Dorsolateral prefrontal cortex (tissue), 120 donors: ENCODE measurements at regions of chr17 and their contacts with region 1.

Region 1: GRCh38 chr17:17919169-17920107 is 52.8 kb downstream of the TOM1L2 start:
- DNase-seq: peak; percentile 40 to 81 (median 78)
- H3K4me3 ChIP-seq: no peak overlapping the region
- H3K27ac ChIP-seq: peak overlapping the region in 52 of 59 donors; percentile 24 to 99 (median 90)
- H3K27me3 ChIP-seq: no peaks in the 10 kb centered on the region
- CTCF ChIP-seq: peak in 55 of 56 donors; percentile 33 to 88 (median 74)

Region 2: DNA sequence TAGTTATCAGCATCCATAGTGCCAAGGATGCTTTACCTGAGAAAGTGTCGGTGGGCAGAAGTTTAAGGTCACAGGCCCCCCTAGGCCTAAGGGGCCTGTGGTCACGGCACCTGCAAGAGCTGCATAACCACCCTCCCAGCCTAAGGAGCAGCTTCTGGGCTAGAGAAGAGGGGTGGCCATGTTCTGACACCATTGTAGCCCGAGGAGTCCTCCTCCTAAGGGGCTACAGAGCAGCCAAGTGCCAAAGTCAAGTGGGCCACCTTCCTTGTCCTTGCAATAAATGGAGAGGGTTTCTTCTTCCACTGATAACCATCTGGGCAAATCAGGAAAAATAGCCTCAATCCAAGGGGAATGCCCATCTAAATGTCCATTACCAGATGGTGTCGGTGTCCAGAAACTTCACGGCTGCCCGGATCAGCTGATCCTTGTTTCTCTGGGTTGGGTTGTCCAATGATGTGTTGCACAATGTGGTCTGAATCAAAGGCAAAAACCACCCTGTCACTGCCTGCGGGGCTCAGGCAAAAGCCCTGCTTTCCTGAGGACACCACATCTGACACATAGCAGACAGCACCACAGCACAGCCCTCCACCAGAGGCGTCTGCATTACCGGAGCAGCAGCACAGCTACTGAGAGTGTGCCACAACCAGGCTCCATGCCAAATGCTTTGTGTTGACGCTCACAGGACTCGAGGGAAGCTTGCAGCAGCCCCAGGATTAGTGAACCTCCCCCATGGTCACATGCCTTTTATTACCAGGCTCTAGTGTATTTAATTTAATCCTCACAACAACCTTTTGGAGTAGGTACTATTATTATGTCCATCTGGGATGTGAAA is 106.7 kb after region 1 on chr17:
- intact Hi-C with region 1: loop called in 1 of 2 experiments (anchors 5 kb)
- DNase-seq: peak in 9 of 10 donors; percentile 34 to 77 (median 58)
- H3K4me3 ChIP-seq: no peak overlapping the region
- H3K27ac ChIP-seq: peak overlapping the region in 39 of 59 donors; percentile 0 to 81 (median 55)
- H3K27me3 ChIP-seq: no peaks in the 10 kb centered on the region
- CTCF ChIP-seq: no peak